Ascending aorta (tissue), 2 donors: ENCODE measurements at regions of chr14 and their contacts with region 1.

Region 1: GRCh38 chr14:63174760-63175211 is 29.5 kb upstream of the RHOJ start:
- DNase-seq: no peak
- H3K4me3 ChIP-seq: no peak overlapping the region
- H3K27ac ChIP-seq: no peak overlapping the region
- H3K4me1 ChIP-seq: peaks cover 0 to 5% of the 10 kb centered on the region in 2 donors
- H3K27me3 ChIP-seq: no peaks in the 10 kb centered on the region
- CTCF ChIP-seq: peak; percentile 31 to 65 (median 40)

Region 2: DNA sequence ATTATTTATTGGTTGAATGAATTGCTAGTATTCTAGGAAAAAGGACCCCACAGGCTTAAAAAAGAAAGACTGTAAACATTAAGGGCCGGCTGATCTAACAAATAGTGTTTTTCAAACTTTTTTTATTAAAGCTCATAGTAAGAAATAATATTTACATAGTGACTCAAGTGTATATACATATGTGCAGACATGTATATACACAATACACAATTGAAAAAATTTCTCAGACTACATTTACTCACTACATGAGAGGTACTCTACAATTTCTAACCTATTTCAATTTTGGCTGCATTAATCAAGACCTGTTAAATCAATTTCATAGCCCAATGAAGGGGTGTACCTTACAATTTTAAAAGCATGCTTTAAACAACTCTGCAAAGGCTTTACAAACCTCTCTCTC is 147.1 kb before region 1 on chr14:
- intact Hi-C with region 1: no loop called
- DNase-seq: no peak
- H3K4me3 ChIP-seq: no peak overlapping the region
- H3K27ac ChIP-seq: no peak overlapping the region
- H3K4me1 ChIP-seq: no peaks in the 10 kb centered on the region
- H3K27me3 ChIP-seq: no peaks in the 10 kb centered on the region
- CTCF ChIP-seq: no peak

Region 3: DNA sequence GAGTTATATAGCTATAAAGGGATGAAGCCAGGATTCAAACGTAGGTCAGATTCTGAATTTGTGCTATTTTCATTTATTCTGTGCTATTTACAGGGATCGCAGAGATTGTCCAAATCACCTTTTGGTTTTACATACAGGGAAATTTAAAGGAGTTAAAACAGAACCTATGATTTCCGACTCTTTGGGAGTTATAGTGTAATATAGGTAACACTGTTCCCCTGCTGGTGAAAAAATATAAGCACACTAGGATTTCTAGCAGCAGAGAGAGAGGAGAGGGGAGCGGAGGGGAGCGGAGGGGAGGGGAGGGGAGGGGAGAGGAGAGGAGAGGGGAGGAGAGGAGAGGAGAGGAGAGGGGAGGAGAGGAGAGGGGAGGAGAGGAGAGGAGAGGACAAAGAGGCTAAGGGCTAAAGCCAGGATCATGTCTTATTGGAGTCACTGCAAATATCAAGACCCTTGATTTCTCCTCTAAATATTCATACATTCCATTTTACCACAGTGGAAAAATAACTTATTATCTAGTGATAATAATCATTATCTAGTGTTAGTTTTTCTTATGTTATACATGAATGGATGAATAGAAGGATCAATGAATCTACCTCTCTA is 83.3 kb before region 1 on chr14:
- intact Hi-C with region 1: no loop called
- DNase-seq: no peak
- H3K4me3 ChIP-seq: no peak overlapping the region
- H3K27ac ChIP-seq: no peak overlapping the region
- H3K4me1 ChIP-seq: no peaks in the 10 kb centered on the region
- H3K27me3 ChIP-seq: no peaks in the 10 kb centered on the region
- CTCF ChIP-seq: no peak

Region 4: GRCh38 chr14:63203618-63204406 is 29.0 kb after region 1 on chr14:
- intact Hi-C with region 1: loop called (anchors 2 kb)
- DNase-seq: peak; percentile 13 to 91
- H3K4me3 ChIP-seq: peak overlapping the region; percentile 48 to 69
- H3K27ac ChIP-seq: peak overlapping the region; percentile 90 to 93
- H3K4me1 ChIP-seq: peaks cover 0 to 3% of the 10 kb centered on the region in 2 donors
- H3K27me3 ChIP-seq: no peaks in the 10 kb centered on the region
- CTCF ChIP-seq: peak in 1 of 3 experiments; percentile 17

Region 5: DNA sequence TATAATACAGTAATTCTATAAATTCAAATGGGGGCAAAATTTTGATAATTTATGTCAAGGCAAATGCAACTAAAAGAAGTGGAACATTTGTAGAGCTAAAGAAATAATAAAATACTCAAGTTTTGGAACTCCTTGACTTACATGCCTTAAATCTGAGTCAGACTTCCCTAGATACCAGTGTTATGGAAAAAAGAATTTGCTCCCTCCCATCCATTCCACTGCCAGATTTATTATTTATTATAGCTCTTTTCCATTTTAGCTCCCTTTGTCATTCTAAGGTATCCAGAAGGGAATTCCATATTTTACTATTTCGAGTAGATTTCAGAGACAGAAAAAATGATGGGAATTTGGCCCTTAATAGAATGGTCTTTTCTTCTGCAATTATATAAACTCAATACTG is 73.4 kb after region 1 on chr14:
- intact Hi-C with region 1: no loop called
- DNase-seq: no peak
- H3K4me3 ChIP-seq: no peak overlapping the region
- H3K27ac ChIP-seq: peak overlapping the region; percentile 45 to 66
- H3K4me1 ChIP-seq: peaks cover 0 to 11% of the 10 kb centered on the region in 2 donors
- H3K27me3 ChIP-seq: no peaks in the 10 kb centered on the region
- CTCF ChIP-seq: no peak

Region 6: GRCh38 chr14:63276492-63277342 is 101.9 kb after region 1 on chr14:
- intact Hi-C with region 1: loop called (anchors 1 kb)
- DNase-seq: no peak
- H3K4me3 ChIP-seq: no peak overlapping the region
- H3K27ac ChIP-seq: no peak overlapping the region
- H3K4me1 ChIP-seq: no peaks in the 10 kb centered on the region
- H3K27me3 ChIP-seq: no peaks in the 10 kb centered on the region
- CTCF ChIP-seq: peak; percentile 70 to 80 (median 72)

Region 7: DNA sequence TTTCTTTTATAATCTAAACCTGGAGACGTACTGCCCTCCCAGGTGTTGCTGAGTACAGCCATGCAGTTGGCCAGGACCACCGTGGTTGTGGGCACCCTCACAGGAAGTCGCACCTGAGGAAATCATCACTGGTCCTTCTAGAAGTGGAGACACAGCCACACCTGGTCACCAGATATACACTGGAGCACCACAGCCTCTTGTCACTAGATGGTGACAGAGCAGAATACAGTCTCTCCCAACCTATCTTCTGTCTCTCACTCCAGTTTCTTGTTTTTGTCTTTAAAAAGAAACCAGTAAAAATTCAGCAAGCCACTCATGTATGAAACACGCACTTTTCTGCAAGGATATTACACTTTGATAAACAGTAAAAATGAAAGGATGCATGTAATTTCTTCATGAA is 187.0 kb after region 1 on chr14:
- intact Hi-C with region 1: loop called (anchors 10 kb)
- DNase-seq: no peak
- H3K4me3 ChIP-seq: no peak overlapping the region
- H3K27ac ChIP-seq: no peak overlapping the region
- H3K4me1 ChIP-seq: no peaks in the 10 kb centered on the region
- H3K27me3 ChIP-seq: no peaks in the 10 kb centered on the region
- CTCF ChIP-seq: no peak

Region 8: GRCh38 chr14:63524537-63525155 is 349.9 kb after region 1 on chr14:
- intact Hi-C with region 1: no loop called
- DNase-seq: no peak
- H3K4me3 ChIP-seq: no peak overlapping the region
- H3K27ac ChIP-seq: no peak overlapping the region
- H3K4me1 ChIP-seq: no peaks in the 10 kb centered on the region
- H3K27me3 ChIP-seq: no peaks in the 10 kb centered on the region
- CTCF ChIP-seq: no peak